HepG2 (cell line): ENCODE measurements at regions of chr2 and their contacts with region 1.

Region 1: DNA sequence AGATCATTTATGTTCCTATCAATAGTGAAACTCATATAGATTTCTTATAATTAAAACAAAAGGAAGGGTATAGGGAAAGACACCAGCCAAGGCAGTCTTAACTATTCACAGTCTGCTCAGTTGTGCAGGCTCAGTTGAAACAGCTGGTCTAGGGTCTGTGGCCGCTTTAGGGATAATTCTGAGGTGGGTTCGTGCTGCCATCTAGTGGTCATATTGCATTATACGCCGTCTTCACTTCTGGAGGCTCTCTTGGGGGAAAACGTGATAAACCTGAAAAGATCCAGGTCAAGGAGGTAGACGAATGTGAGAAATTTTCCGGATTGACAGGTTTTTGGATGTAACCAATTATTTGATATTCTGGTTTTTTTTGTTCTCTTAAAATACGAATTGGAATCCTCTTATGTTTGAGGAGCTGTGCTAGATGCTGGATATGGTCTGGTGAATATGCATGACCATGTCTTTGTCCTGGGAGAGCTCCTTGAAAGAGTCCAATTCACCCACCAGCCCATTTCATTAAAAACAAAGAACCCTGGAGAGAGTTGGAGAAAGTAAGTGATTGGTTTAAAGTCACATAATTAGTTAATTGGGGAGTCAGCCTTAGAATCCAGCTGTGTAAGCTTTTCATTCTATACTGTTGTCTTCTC is 492.4 kb downstream of the PLCL1 start:
- DNase-seq: peak; percentile 59
- ATAC-seq: peak; percentile 94
- H3K4me3 ChIP-seq: no peak overlapping the region
- H3K27ac ChIP-seq: no peak overlapping the region
- H3K4me1 ChIP-seq: no peaks in the 10 kb centered on the region
- H3K27me3 ChIP-seq: peaks cover 0 to 3% of the 10 kb centered on the region in 2 experiments; a peak in 2 of 5 replicates
- CTCF ChIP-seq: peak; percentile 84
- EP300 ChIP-seq: no peak
- POLR2A ChIP-seq: no peak
- RAD21 ChIP-seq: 0 out of 2 replicates have a peak, but pooled peaks have one; percentile 35

Region 2: GRCh38 chr2:197804049-197804757 is 492.6 kb before region 1 on chr2 and contains the start of gene PLCL1:
- CTCF ChIA-PET with region 1: interaction called, 17 read pairs
- POLR2A ChIA-PET with region 1: no interaction called
- in situ Hi-C with region 1: loop called (anchors 5 kb)
- intact Hi-C with region 1: loop called (anchors 1 kb)
- DNase-seq: peak; percentile 89
- ATAC-seq: peak; percentile 100
- H3K4me3 ChIP-seq: peak within 1 kb of the TSS; percentile 61 to 70 (median 65)
- H3K27ac ChIP-seq: no peak within 1 kb of the TSS
- H3K4me1 ChIP-seq: peaks cover 10% of the 10 kb centered on the region
- H3K27me3 ChIP-seq: peaks cover 6 to 44% of the 10 kb centered on the region in 2 experiments
- CTCF ChIP-seq: no peak
- EP300 ChIP-seq: no peak
- POLR2A ChIP-seq: no peak
- RAD21 ChIP-seq: peak; percentile 41; the same call in 1 of the 2 replicates
- total RNA-seq, gene PLCL1: not detected in 2 replicates

Region 3: GRCh38 chr2:197851451-197851850 is 445.3 kb before region 1 on chr2:
- CTCF ChIA-PET with region 1: no interaction called
- POLR2A ChIA-PET with region 1: no interaction called
- in situ Hi-C with region 1: no loop called
- intact Hi-C with region 1: loop called (anchors 1 kb)
- DNase-seq: peak; percentile 11
- ATAC-seq: peak; percentile 75
- H3K4me3 ChIP-seq: no peak overlapping the region
- H3K27ac ChIP-seq: no peak overlapping the region
- H3K4me1 ChIP-seq: no peaks in the 10 kb centered on the region
- H3K27me3 ChIP-seq: no peaks in the 10 kb centered on the region
- CTCF ChIP-seq: no peak
- EP300 ChIP-seq: no peak
- POLR2A ChIP-seq: no peak
- RAD21 ChIP-seq: no peak

Region 4: GRCh38 chr2:198053776-198054698 is 242.8 kb before region 1 on chr2:
- CTCF ChIA-PET with region 1: no interaction called
- POLR2A ChIA-PET with region 1: no interaction called
- in situ Hi-C with region 1: no loop called
- intact Hi-C with region 1: loop called (anchors 1 kb)
- DNase-seq: peak; percentile 10
- ATAC-seq: peak; percentile 96
- H3K4me3 ChIP-seq: no peak overlapping the region
- H3K27ac ChIP-seq: no peak overlapping the region
- H3K4me1 ChIP-seq: no peaks in the 10 kb centered on the region
- H3K27me3 ChIP-seq: no peaks in the 10 kb centered on the region
- CTCF ChIP-seq: peak; percentile 47
- EP300 ChIP-seq: no peak
- POLR2A ChIP-seq: no peak
- RAD21 ChIP-seq: no peak

Region 5: DNA sequence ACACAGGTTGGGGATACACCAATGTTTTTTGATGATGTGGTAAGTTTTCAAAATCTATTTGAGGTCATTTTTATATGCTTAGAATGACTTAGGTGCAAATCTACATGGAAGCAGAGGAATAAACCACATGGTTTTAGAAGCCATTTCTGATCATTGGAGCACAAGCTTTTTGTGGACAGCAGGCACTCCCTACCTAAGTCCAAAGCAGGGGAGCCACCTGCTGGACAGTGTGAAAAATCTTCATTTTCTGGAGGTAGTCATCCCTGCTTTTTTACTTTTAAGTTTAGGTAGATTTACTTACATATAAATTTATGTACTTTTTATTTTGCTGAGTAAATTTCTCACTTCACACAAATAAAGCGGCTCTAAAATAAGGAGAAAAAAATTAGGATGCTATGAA is 169.2 kb before region 1 on chr2:
- CTCF ChIA-PET with region 1: no interaction called
- POLR2A ChIA-PET with region 1: no interaction called
- in situ Hi-C with region 1: no loop called
- intact Hi-C with region 1: loop called (anchors 1 kb)
- DNase-seq: peak; percentile 56
- ATAC-seq: peak; percentile 93
- H3K4me3 ChIP-seq: no peak overlapping the region
- H3K27ac ChIP-seq: no peak overlapping the region
- H3K4me1 ChIP-seq: peaks cover 5% of the 10 kb centered on the region; the same call in 1 of the 2 replicates
- H3K27me3 ChIP-seq: no peaks in the 10 kb centered on the region
- CTCF ChIP-seq: peak; percentile 76
- EP300 ChIP-seq: no peak
- POLR2A ChIP-seq: no peak
- RAD21 ChIP-seq: no peak

Region 6: DNA sequence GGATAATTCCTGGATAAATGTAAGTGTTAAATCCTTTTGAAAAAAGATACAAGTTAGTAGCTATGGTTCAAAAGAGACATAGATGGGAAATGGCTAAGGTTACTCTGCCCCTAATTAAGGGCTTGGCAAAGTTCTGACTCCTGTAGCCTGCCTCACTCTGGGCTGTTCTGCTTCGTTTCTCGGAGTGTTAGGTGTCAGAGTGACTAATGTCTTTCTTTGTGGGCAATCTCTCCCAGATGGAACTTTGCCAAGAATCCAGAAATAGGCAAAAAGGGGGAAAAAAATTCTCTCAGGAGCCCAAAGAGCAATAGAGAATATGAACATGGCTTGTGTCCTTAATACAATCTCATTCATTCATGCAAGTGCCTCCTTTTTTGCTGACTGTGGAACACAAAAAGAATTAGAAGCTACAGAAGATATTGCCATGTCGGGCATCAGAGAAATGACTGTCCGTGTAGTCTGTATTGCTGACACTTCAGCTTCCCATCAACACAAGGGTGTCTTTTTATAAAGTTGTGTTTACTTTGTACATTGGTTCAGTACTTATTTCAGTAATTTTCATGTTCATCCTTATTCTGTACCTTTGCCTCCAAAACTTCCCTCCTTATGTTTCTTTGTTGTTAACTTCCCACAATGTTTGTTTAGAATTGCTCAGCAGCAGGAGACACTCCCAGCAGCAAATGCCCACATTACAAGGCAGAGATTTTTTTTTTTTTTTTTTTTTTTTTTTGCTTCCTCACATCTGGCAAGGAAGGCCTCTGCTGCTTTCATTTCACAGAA is 1420.2 kb after region 1 on chr2:
- CTCF ChIA-PET with region 1: no interaction called
- POLR2A ChIA-PET with region 1: no interaction called
- in situ Hi-C with region 1: no loop called
- intact Hi-C with region 1: no loop called
- DNase-seq: peak; percentile 21
- ATAC-seq: peak; percentile 58
- H3K4me3 ChIP-seq: no peak overlapping the region
- H3K27ac ChIP-seq: no peak overlapping the region
- H3K4me1 ChIP-seq: peaks cover 31% of the 10 kb centered on the region
- H3K27me3 ChIP-seq: no peaks in the 10 kb centered on the region
- CTCF ChIP-seq: no peak
- EP300 ChIP-seq: no peak
- POLR2A ChIP-seq: no peak
- RAD21 ChIP-seq: no peak